Right cardiac atrium (tissue), 5 donors: ENCODE measurements at regions of chr12 and their contacts with region 1.

Region 1: GRCh38 chr12:13661005-13661887 is 320.2 kb downstream of the GRIN2B start:
- DNase-seq: peak; percentile 23 to 57 (median 40)
- ATAC-seq: peak; percentile 71 to 81
- H3K4me3 ChIP-seq: no peak overlapping the region
- H3K27ac ChIP-seq: no peak overlapping the region
- H3K4me1 ChIP-seq: no peaks in the 10 kb centered on the region
- H3K27me3 ChIP-seq: no peaks in the 10 kb centered on the region

Region 2: DNA sequence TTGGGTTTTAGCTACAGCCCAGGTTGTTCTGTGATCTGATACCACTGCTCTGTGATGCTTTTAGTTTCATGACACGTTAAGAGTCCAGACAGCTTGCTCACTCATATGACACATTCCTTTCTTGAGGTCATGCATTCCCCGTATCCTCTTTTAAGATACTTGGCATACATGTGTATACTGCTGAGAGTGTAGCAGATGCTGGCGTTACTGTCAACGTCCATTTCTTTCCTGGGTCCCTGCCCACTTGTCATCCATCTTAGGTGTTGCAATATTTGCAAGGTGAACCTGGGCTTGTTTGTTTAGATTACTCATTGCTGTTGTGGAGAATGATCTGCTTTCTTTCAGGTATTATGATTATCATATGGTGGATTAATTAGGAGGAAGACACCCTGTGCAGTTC is 473.8 kb before region 1 on chr12:
- intact Hi-C with region 1: no loop called
- DNase-seq: no peak
- ATAC-seq: peak; percentile 43 to 52
- H3K4me3 ChIP-seq: no peak overlapping the region
- H3K27ac ChIP-seq: no peak overlapping the region
- H3K4me1 ChIP-seq: peaks cover 2% of the 10 kb centered on the region
- H3K27me3 ChIP-seq: no peaks in the 10 kb centered on the region

Region 3: DNA sequence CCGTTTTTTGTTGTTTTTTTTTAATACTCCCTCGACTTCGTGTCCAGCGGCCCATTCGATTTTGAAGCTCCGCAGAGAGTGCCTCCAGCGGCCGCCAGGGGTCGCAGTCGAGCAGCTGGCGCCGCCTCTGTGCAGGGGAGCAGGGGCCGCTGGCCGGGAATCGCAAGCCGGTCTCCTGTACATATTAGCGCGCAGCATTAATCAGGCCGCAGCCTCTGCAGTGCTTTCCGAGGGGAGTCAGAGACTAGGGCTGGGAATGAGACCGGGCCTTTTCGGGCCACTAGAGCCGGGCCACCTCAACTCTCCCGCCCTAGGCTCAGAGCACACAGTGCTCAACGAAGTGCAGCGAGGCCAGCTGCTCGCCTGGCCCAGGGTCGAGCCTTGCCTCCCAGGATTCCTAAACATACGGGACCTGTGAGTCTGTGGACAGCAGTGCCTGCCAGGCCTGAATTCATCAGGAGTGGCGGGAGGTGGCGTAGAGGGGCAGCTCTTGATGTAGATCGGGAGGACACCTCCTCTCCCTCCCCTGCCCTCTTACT is 382.9 kb before region 1 on chr12:
- intact Hi-C with region 1: loop called (anchors 5 to 10 kb)
- DNase-seq: peak; percentile 76 to 91 (median 91)
- ATAC-seq: peak; percentile 95
- H3K4me3 ChIP-seq: no peak overlapping the region
- H3K27ac ChIP-seq: no peak overlapping the region
- H3K4me1 ChIP-seq: no peaks in the 10 kb centered on the region
- H3K27me3 ChIP-seq: no peaks in the 10 kb centered on the region

Region 4: DNA sequence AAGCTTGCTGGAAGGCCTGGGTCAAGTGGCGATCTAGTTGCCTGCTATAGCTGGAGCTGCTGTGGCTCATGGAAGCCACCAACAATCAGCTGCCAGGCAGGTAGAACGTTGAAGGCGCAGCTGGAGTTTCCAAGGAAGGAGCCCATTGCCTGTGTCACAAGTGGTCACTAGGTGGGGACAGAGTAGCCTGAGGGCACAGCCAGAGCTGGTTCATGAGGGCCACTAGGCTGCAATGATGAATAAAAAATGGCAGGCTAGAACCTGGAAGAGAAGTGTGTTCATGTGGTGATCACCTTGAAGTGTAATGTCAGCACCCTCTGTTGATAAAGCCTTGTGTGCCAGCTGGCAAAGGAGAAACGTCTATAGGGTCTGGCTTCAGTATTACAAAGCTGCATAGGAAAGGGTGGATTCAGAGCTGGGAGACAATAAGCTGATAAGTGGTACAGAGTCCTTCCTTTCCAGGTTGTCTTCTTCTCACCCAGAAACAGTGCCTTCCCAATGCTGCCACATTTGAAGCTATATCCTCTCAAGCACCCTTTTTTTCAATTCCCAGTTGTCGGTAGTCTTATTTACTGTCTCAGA is 298.9 kb before region 1 on chr12:
- intact Hi-C with region 1: loop called in 1 of 4 experiments (anchors 10 kb)
- DNase-seq: peak; percentile 56 to 81 (median 61)
- ATAC-seq: peak; percentile 60 to 75
- H3K4me3 ChIP-seq: no peak overlapping the region
- H3K27ac ChIP-seq: no peak overlapping the region
- H3K4me1 ChIP-seq: no peaks in the 10 kb centered on the region
- H3K27me3 ChIP-seq: peaks cover 3% of the 10 kb centered on the region

Region 5: GRCh38 chr12:13784504-13784903 is 123.3 kb after region 1 on chr12:
- intact Hi-C with region 1: no loop called
- DNase-seq: no peak
- ATAC-seq: peak; percentile 51 to 85
- H3K4me3 ChIP-seq: no peak overlapping the region
- H3K27ac ChIP-seq: no peak overlapping the region
- H3K4me1 ChIP-seq: no peaks in the 10 kb centered on the region
- H3K27me3 ChIP-seq: no peaks in the 10 kb centered on the region